Caco-2 (cell line): ENCODE measurements at regions of chr7 and their contacts with region 1.

Region 1: GRCh38 chr7:156609010-156609877 is 31.3 kb upstream of the RNF32 start:
- DNase-seq: peak; percentile 87 to 89
- H3K4me3 ChIP-seq: no peak overlapping the region
- H3K4me3 Mint-ChIP-seq: peak overlapping the region; percentile 54
- H3K27ac Mint-ChIP-seq: peak overlapping the region; percentile 97
- H3K4me1 ChIP-seq: peaks cover 78% of the 10 kb centered on the region
- H3K4me1 Mint-ChIP-seq: peaks cover 58% of the 10 kb centered on the region
- H3K27me3 ChIP-seq: no peaks in the 10 kb centered on the region
- H3K27me3 Mint-ChIP-seq: no peaks in the 10 kb centered on the region
- CTCF ChIP-seq: no peak

Region 2: DNA sequence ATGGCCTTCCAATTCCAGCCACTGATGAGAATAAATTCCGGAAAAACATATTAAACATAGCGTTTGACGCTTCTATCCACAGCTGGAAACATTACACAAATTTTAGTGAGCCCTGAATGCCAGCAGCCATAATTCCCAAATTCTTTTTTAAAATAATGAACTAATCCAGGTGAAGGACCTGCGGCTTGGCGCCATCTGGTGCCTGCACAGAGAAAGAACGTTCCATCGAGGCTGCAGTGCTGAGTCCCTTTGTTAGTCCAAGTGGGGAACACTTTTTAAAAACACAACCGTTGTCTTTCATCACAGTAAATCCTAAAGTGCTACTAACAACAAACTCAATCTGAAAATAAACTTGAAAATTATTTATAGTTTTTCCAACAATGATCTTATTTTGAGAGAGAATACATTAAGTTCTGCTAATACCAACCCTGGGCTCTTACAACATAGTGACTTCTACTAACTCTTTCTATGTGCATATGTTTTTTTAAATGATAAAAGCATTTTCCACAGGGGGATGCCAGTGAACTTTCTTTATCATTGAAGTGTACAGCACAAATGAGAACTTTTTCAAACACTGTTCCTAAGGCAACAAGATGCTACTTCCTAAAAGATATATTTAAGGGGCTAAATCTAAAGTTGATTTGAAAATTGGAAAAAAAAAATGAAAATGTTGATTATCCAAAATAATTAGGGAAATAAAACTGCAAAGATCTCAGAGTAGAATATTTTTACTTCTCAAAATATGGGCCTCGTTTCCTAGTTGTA is 135.6 kb before region 1 on chr7:
- CTCF ChIA-PET with region 1: no interaction called
- POLR2A ChIA-PET with region 1: no interaction called
- intact Hi-C with region 1: no loop called
- DNase-seq: peak in 1 of 2 experiments; percentile 55
- H3K4me3 ChIP-seq: no peak overlapping the region
- H3K4me3 Mint-ChIP-seq: no peak overlapping the region
- H3K27ac Mint-ChIP-seq: no peak overlapping the region
- H3K4me1 ChIP-seq: peaks cover 3% of the 10 kb centered on the region; the same call in 1 of the 2 replicates
- H3K4me1 Mint-ChIP-seq: no peaks in the 10 kb centered on the region
- H3K27me3 ChIP-seq: no peaks in the 10 kb centered on the region
- H3K27me3 Mint-ChIP-seq: no peaks in the 10 kb centered on the region
- CTCF ChIP-seq: peak; percentile 83 to 88

Region 3: GRCh38 chr7:156560075-156560474 is 49.2 kb before region 1 on chr7:
- CTCF ChIA-PET with region 1: interaction called, 4 read pairs
- POLR2A ChIA-PET with region 1: no interaction called
- intact Hi-C with region 1: loop called (anchors 1 kb)
- DNase-seq: peak; percentile 40 to 44
- H3K4me3 ChIP-seq: no peak overlapping the region
- H3K4me3 Mint-ChIP-seq: no peak overlapping the region
- H3K27ac Mint-ChIP-seq: no peak overlapping the region
- H3K4me1 ChIP-seq: no peaks in the 10 kb centered on the region
- H3K4me1 Mint-ChIP-seq: no peaks in the 10 kb centered on the region
- H3K27me3 ChIP-seq: no peaks in the 10 kb centered on the region
- H3K27me3 Mint-ChIP-seq: no peaks in the 10 kb centered on the region
- CTCF ChIP-seq: peak; percentile 52 to 59